Panc1 (cell line): ENCODE measurements at regions of chr5 and their contacts with region 1.

Region 1: GRCh38 chr5:178182158-178182876 is 4.9 kb downstream of the GMCL2 start:
- DNase-seq: no peak
- ATAC-seq: 0 out of 2 replicates have a peak, but pooled peaks have one; percentile 53
- H3K4me3 ChIP-seq: no peak overlapping the region
- H3K27ac ChIP-seq: no peak overlapping the region
- H3K4me1 ChIP-seq: no peaks in the 10 kb centered on the region
- H3K27me3 ChIP-seq: no peaks in the 10 kb centered on the region
- CTCF ChIP-seq: no peak

Region 2: GRCh38 chr5:178086276-178086675 is 96.0 kb before region 1 on chr5:
- CTCF ChIA-PET with region 1: no interaction called
- POLR2A ChIA-PET with region 1: interaction called, 10 read pairs
- in situ Hi-C with region 1: no loop called
- intact Hi-C with region 1: no loop called
- DNase-seq: no peak
- ATAC-seq: peak; percentile 72
- H3K4me3 ChIP-seq: peak overlapping the region; percentile 10 to 41
- H3K27ac ChIP-seq: no peak overlapping the region
- H3K4me1 ChIP-seq: no peaks in the 10 kb centered on the region
- H3K27me3 ChIP-seq: no peaks in the 10 kb centered on the region
- CTCF ChIP-seq: no peak

Region 3: GRCh38 chr5:178196986-178197385 is 14.7 kb after region 1 on chr5:
- CTCF ChIA-PET with region 1: interaction called, 19 read pairs
- POLR2A ChIA-PET with region 1: no interaction called
- in situ Hi-C with region 1: no loop called
- intact Hi-C with region 1: no loop called
- DNase-seq: no peak
- ATAC-seq: peak; percentile 65; the same call in 1 of the 2 replicates
- H3K4me3 ChIP-seq: no peak overlapping the region
- H3K27ac ChIP-seq: no peak overlapping the region
- H3K4me1 ChIP-seq: peaks cover 8% of the 10 kb centered on the region; the same call in 1 of the 2 replicates
- H3K27me3 ChIP-seq: no peaks in the 10 kb centered on the region
- CTCF ChIP-seq: peak; percentile 76; the same call in 1 of the 2 replicates

Region 4: GRCh38 chr5:178221282-178221681 is 39.0 kb after region 1 on chr5:
- CTCF ChIA-PET with region 1: no interaction called
- POLR2A ChIA-PET with region 1: no interaction called
- in situ Hi-C with region 1: no loop called
- intact Hi-C with region 1: no loop called
- DNase-seq: no peak
- ATAC-seq: no peak
- H3K4me3 ChIP-seq: no peak overlapping the region
- H3K27ac ChIP-seq: no peak overlapping the region
- H3K4me1 ChIP-seq: no peaks in the 10 kb centered on the region
- H3K27me3 ChIP-seq: no peaks in the 10 kb centered on the region
- CTCF ChIP-seq: no peak

Region 5: GRCh38 chr5:178496642-178497041 is 314.3 kb after region 1 on chr5:
- CTCF ChIA-PET with region 1: no interaction called
- POLR2A ChIA-PET with region 1: no interaction called
- in situ Hi-C with region 1: no loop called
- intact Hi-C with region 1: no loop called
- DNase-seq: no peak
- ATAC-seq: no peak
- H3K4me3 ChIP-seq: no peak overlapping the region
- H3K27ac ChIP-seq: no peak overlapping the region
- H3K4me1 ChIP-seq: no peaks in the 10 kb centered on the region
- H3K27me3 ChIP-seq: peaks cover 7% of the 10 kb centered on the region
- CTCF ChIP-seq: no peak

Region 6: GRCh38 chr5:178751286-178751685 is 569.0 kb after region 1 on chr5:
- CTCF ChIA-PET with region 1: no interaction called
- POLR2A ChIA-PET with region 1: interaction called, 11 read pairs
- in situ Hi-C with region 1: no loop called
- intact Hi-C with region 1: no loop called
- DNase-seq: no peak
- ATAC-seq: no peak
- H3K4me3 ChIP-seq: no peak overlapping the region
- H3K27ac ChIP-seq: no peak overlapping the region
- H3K4me1 ChIP-seq: no peaks in the 10 kb centered on the region
- H3K27me3 ChIP-seq: no peaks in the 10 kb centered on the region
- CTCF ChIP-seq: no peak